BJ (cell line): ENCODE measurements at regions of chr17 and their contacts with region 1.

Region 1: GRCh38 chr17:36148559-36149295 is 27.7 kb downstream of the TBC1D3B start:
- DNase-seq: no peak
- H3K4me3 ChIP-seq: no peak overlapping the region
- H3K27me3 ChIP-seq: peaks cover 2% of the 10 kb centered on the region
- CTCF ChIP-seq: peak; percentile 99

Region 2: GRCh38 chr17:35969558-35970380 is 179.0 kb before region 1 on chr17:
- CTCF ChIA-PET with region 1: interaction called, 16 read pairs
- POLR2A ChIA-PET with region 1: no interaction called
- DNase-seq: peak; percentile 10
- H3K4me3 ChIP-seq: no peak overlapping the region
- H3K27me3 ChIP-seq: peaks cover 2% of the 10 kb centered on the region
- CTCF ChIP-seq: peak; percentile 78

Region 3: DNA sequence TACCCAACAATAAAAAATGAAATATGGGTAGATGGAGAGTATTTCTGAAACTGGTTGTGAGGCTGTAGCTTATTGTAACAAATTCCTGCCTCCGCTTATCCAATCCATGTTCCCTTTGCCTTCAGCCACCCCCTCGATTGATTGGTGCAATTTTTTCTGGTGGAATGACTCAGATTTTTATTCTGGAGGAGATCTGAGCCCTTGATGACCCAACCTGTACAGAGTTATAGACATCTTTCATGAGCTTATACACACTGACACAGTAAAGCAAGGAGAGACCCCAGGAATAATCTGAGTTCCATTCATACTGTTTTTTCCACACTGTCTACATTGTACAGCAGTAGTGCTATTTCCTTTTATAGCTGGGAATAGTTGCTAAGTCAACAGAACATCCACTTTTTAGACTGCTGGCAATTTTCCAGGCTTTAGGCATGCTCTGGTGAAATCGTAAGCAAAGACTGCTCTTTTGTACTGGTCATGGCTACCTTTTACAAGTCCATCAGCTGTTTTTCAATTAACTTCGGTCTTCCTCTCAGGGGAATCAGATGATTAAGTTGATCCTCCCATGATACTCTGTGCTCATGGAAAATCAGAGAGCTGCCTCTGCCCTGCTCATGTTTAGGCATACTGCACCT is 15.0 kb before region 1 on chr17:
- CTCF ChIA-PET with region 1: interaction called, 26 read pairs
- POLR2A ChIA-PET with region 1: no interaction called
- DNase-seq: no peak
- H3K4me3 ChIP-seq: no peak overlapping the region
- H3K27me3 ChIP-seq: no peaks in the 10 kb centered on the region
- CTCF ChIP-seq: no peak